HepG2 (cell line): ENCODE measurements at regions of chr11 and their contacts with region 1.

Region 1: DNA sequence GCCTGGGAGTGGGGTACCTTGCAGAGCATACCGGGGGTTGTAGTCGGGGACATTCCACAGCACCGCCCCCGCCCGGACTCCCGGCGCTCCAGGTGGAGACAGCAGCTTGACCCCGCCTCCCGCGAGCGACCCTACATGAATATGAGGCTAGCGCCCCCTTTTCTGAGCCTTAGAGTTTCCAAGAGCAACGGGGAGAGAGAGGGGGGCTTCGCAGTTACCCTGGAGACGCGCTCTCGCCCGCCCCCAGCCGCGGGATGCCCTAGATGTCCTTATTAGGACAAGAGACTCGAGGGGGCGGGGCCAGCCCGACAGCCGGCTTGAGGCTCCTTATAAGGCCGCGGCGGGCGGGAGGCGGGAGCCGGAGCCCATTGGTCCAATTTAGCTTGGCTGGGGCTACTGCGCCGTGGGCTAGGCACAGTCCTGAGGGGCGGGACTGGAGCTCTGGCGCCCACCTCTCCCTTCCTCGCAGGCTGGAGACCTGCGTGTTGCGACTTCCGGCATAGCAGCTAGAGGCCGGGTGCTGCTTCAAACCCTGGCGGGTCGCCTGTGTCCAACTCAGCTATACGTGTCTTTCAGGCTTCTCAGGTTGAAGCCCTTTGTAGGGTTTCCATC is 927 bp upstream of the MUS81 start:
- DNase-seq: peak; percentile 98
- ATAC-seq: peak; percentile 78
- H3K4me3 ChIP-seq: peak overlapping the region; percentile 80 to 99 (median 89)
- H3K27ac ChIP-seq: peak overlapping the region; percentile 90
- H3K4me1 ChIP-seq: peaks cover 53% of the 10 kb centered on the region
- H3K27me3 ChIP-seq: no peaks in the 10 kb centered on the region; a peak in 1 of 5 replicates
- CTCF ChIP-seq: peak; percentile 45
- EP300 ChIP-seq: no peak
- POLR2A ChIP-seq: peak in 1 of 2 experiments; percentile 88; a peak in 2 of 4 replicates
- RAD21 ChIP-seq: no peak

Region 2: DNA sequence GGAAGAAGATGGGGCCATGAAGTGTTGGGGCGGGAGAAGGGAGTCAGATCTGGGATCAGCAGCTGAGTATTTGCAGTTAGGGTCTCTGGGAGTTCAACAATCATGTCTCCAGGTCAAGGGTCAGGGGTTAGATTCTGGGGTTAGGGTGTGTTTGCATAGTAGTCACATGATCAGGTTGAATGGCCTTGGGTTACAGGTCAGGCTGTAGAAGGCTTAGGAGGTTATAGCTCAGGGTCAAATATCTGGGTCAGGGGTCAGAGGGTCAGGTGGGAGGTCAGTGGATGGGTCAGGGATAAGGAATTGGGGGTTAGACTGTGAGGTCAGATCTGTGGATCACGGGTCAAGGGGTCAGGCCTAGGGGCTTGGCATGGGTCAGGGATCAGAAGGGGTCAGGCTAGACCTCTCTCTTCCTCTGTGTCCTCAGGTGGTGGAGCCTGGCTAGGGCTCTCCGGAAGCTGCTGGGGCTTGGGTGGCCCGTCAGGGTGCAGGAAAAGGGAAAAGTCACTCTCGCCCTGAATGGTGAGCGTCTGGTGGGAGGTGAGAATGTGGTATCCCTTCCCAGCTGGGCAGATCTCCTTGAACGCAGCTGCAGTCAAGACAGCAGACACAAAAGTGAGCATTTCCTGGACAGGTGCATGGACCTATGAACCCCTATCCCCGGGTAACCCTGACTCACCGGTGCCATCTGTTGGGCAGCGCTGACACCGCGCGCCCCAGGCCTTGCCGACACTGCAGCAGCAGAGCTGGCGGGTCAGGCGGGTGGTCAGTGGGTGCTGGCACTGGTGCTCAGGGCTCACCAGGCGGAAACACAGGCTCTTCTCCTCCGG is 307.5 kb before region 1 on chr11:
- CTCF ChIA-PET with region 1: no interaction called
- POLR2A ChIA-PET with region 1: no interaction called
- in situ Hi-C with region 1: loop called (anchors 10 kb)
- intact Hi-C with region 1: no loop called
- DNase-seq: peak; percentile 70
- ATAC-seq: peak; percentile 58
- H3K4me3 ChIP-seq: peak overlapping the region in 2 of 3 experiments; percentile 0 to 42; a peak in 1 of 6 replicates
- H3K27ac ChIP-seq: peak overlapping the region; percentile 70
- H3K4me1 ChIP-seq: peaks cover 53% of the 10 kb centered on the region
- H3K27me3 ChIP-seq: no peaks in the 10 kb centered on the region
- CTCF ChIP-seq: peak; percentile 83
- EP300 ChIP-seq: peak in 1 of 2 experiments; percentile 34; a peak in 2 of 4 replicates
- POLR2A ChIP-seq: no peak
- RAD21 ChIP-seq: peak; percentile 42; the same call in 1 of the 2 replicates

Region 3: DNA sequence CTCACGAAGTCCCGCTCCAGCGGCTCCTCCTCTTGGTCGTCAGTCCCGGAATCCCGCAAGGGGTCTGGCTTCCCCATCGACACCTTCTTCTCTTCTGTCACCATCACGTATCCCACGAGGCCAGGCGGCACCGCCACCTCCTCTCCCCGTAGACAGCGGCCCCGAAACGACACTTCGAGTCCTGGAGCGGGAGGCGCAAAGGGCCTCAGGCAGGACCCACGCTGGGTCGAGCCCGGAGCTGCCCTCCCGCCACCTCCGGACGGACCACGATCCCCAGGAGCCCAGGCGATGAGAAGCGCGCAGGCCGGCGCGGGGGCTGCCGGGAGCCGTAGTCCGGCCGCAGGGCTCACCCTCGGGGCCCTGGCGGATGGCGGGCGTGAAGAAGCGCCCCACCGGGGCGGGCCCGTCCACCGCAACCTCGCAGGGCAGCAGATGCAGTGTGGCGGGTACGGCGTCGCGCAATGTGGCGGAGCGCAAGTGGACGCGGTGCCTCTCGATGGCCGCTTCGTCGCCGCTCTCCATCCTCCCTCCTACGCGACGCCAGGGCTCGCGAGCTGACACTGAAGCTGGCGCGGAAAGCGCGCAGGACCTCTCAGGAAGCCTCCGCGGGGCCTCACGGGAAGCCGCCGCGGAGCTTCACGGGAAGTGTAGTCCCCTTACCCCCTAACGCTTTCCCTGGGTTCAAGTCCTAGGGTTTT is 138.9 kb before region 1 on chr11 and contains the start of gene RNASEH2C:
- CTCF ChIA-PET with region 1: no interaction called
- POLR2A ChIA-PET with region 1: interaction called, 11 read pairs
- in situ Hi-C with region 1: no loop called
- intact Hi-C with region 1: no loop called
- DNase-seq: peak; percentile 65
- ATAC-seq: peak; percentile 92
- H3K4me3 ChIP-seq: peak within 1 kb of the TSS; percentile 76 to 89 (median 87)
- H3K27ac ChIP-seq: peak within 1 kb of the TSS; percentile 47
- H3K4me1 ChIP-seq: peaks cover 26% of the 10 kb centered on the region
- H3K27me3 ChIP-seq: no peaks in the 10 kb centered on the region; a peak in 1 of 5 replicates
- CTCF ChIP-seq: peak; percentile 20; the same call in 1 of the 2 replicates
- EP300 ChIP-seq: no peak
- POLR2A ChIP-seq: peak in 1 of 2 experiments; percentile 81; a peak in 2 of 4 replicates
- RAD21 ChIP-seq: peak; percentile 42
- total RNA-seq, gene RNASEH2C: 50.9 and 65.1 TPM in 2 replicates

Region 4: DNA sequence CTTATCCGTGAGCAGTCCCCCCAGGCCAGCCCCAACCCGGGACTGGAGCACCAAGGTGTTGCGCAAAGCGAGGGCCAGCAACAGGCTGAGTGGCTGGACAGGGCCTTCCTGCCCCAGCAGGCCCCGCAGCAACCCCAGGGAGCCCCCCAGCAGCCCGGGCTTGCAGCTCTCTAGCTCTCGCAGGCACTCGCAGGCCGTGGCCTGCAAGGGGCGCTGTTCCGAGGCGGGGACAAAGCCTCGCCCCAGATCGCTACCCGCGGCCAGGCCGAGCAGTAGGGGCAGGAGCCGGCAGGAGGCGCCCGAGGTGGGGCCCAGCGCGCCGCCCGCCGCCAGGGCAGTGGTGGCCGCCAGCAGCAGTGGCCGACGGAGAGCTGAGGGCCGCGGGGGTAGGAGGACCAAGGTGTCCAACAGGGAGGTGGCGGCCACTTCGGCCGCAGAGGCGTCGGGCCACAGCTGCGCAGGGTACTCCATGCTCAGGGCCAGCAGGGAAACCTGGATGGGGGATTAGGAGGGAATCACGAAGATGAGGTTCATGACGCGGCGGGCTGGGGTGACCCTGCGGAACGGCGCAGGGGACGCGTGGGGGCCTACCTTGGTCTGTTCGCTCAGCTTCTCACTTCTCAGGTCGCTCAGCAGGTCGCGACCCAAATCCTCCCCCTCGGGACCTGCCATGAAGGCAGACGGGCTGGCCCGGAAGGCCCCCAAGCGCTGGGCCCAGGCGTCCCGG is 79.3 kb before region 1 on chr11:
- CTCF ChIA-PET with region 1: no interaction called
- POLR2A ChIA-PET with region 1: interaction called, 13 read pairs
- in situ Hi-C with region 1: no loop called
- intact Hi-C with region 1: no loop called
- DNase-seq: peak; percentile 53
- ATAC-seq: peak; percentile 74
- H3K4me3 ChIP-seq: peak overlapping the region; percentile 59 to 92 (median 62)
- H3K27ac ChIP-seq: peak overlapping the region; percentile 61
- H3K4me1 ChIP-seq: peaks cover 43% of the 10 kb centered on the region
- H3K27me3 ChIP-seq: peaks cover 1 to 28% of the 10 kb centered on the region in 2 experiments; a peak in 4 of 5 replicates
- CTCF ChIP-seq: peak; percentile 80
- EP300 ChIP-seq: no peak
- POLR2A ChIP-seq: peak in 1 of 2 experiments; percentile 19; a peak in 1 of 4 replicates
- RAD21 ChIP-seq: peak; percentile 80

Region 5: GRCh38 chr11:65873318-65874156 is 14.2 kb after region 1 on chr11:
- CTCF ChIA-PET with region 1: no interaction called
- POLR2A ChIA-PET with region 1: interaction called, 81 read pairs
- in situ Hi-C with region 1: no loop called
- intact Hi-C with region 1: no loop called
- DNase-seq: peak; percentile 80
- ATAC-seq: peak; percentile 45
- H3K4me3 ChIP-seq: peak overlapping the region; percentile 58 to 73 (median 63); a peak in 5 of 6 replicates
- H3K27ac ChIP-seq: peak overlapping the region; percentile 38
- H3K4me1 ChIP-seq: peaks cover 39% of the 10 kb centered on the region
- H3K27me3 ChIP-seq: no peaks in the 10 kb centered on the region; a peak in 1 of 5 replicates
- CTCF ChIP-seq: no peak; the same call in 1 of the 2 replicates
- EP300 ChIP-seq: no peak
- POLR2A ChIP-seq: peak; percentile 15 to 77; a peak in 2 of 4 replicates
- RAD21 ChIP-seq: no peak

Region 6: GRCh38 chr11:65900125-65900898 is 41.0 kb after region 1 on chr11 and contains the start of gene FOSL1:
- CTCF ChIA-PET with region 1: no interaction called
- POLR2A ChIA-PET with region 1: interaction called, 11 read pairs
- in situ Hi-C with region 1: no loop called
- intact Hi-C with region 1: no loop called
- DNase-seq: peak; percentile 85
- ATAC-seq: peak; percentile 74
- H3K4me3 ChIP-seq: peak within 1 kb of the TSS; percentile 84 to 89 (median 89)
- H3K27ac ChIP-seq: peak within 1 kb of the TSS; percentile 66
- H3K4me1 ChIP-seq: peaks cover 55% of the 10 kb centered on the region
- H3K27me3 ChIP-seq: no peaks in the 10 kb centered on the region; a peak in 1 of 5 replicates
- CTCF ChIP-seq: peak; percentile 15; the same call in 1 of the 2 replicates
- EP300 ChIP-seq: no peak
- POLR2A ChIP-seq: peak in 1 of 2 experiments; percentile 88; a peak in 2 of 4 replicates
- RAD21 ChIP-seq: peak; percentile 31; the same call in 1 of the 2 replicates
- total RNA-seq, gene FOSL1: 3.1 and 4.0 TPM in 2 replicates

Region 7: GRCh38 chr11:65954771-65955170 is 95.5 kb after region 1 on chr11:
- CTCF ChIA-PET with region 1: no interaction called
- POLR2A ChIA-PET with region 1: no interaction called
- in situ Hi-C with region 1: no loop called
- intact Hi-C with region 1: no loop called
- DNase-seq: no peak
- ATAC-seq: no peak
- H3K4me3 ChIP-seq: no peak overlapping the region
- H3K27ac ChIP-seq: no peak overlapping the region
- H3K4me1 ChIP-seq: peaks cover 59% of the 10 kb centered on the region
- H3K27me3 ChIP-seq: no peaks in the 10 kb centered on the region
- CTCF ChIP-seq: no peak
- EP300 ChIP-seq: no peak
- POLR2A ChIP-seq: no peak
- RAD21 ChIP-seq: no peak

Region 8: DNA sequence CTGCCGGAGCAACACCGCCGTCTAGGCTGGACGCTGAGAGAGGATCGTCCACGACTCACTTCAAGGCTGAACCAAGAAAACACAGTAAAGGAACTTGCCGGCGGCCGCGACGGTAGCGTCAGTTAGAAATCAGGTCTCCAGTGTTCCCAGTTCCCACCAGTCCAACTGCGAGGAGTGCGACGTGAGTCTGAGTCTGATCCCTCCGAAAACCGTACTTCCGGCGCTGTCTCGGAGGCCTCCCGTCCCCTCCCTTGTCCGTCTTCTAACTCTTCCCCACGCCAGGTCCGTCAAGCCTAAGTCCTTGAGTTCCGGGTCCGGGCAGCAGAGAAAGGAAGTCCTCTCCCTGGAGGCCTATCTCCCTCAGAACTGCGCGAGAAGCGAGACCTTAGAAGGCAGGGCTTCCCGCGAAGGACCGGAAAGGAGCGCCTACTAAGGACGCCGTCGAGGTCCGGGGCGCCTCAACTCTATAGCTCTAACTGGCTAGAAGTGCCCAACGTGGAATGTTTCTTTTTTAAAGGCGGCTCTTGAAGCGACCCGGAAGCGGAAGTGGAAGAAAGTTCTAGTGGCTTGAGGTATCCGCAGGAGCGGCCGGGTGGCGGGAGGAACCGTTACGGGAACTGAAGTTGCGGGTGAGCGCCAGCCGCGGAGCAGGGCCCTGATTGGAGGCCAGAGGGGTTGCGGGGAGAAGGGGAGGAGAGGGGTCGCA is 142.8 kb after region 1 on chr11 and contains the starts of genes BANF1 and EIF1AD:
- CTCF ChIA-PET with region 1: no interaction called
- POLR2A ChIA-PET with region 1: interaction called, 16 read pairs
- in situ Hi-C with region 1: no loop called
- intact Hi-C with region 1: no loop called
- DNase-seq: peak; percentile 96
- ATAC-seq: peak; percentile 85
- H3K4me3 ChIP-seq: peak within 1 kb of the TSS; percentile 81 to 92 (median 88)
- H3K27ac ChIP-seq: peak within 1 kb of the TSS; percentile 94
- H3K4me1 ChIP-seq: peaks cover 35% of the 10 kb centered on the region
- H3K27me3 ChIP-seq: no peaks in the 10 kb centered on the region; a peak in 1 of 5 replicates
- CTCF ChIP-seq: peak; percentile 44; the same call in 1 of the 2 replicates
- EP300 ChIP-seq: peak in 1 of 2 experiments; percentile 53; a peak in 1 of 4 replicates
- POLR2A ChIP-seq: peak; percentile 87 to 90
- RAD21 ChIP-seq: peak; percentile 43; the same call in 1 of the 2 replicates
- total RNA-seq, gene BANF1: 40.5 and 45.9 TPM in 2 replicates
- total RNA-seq, gene EIF1AD: 30.8 and 45.9 TPM in 2 replicates